HepG2 (cell line): ENCODE measurements at regions of chr14 and their contacts with region 1.

Region 1: DNA sequence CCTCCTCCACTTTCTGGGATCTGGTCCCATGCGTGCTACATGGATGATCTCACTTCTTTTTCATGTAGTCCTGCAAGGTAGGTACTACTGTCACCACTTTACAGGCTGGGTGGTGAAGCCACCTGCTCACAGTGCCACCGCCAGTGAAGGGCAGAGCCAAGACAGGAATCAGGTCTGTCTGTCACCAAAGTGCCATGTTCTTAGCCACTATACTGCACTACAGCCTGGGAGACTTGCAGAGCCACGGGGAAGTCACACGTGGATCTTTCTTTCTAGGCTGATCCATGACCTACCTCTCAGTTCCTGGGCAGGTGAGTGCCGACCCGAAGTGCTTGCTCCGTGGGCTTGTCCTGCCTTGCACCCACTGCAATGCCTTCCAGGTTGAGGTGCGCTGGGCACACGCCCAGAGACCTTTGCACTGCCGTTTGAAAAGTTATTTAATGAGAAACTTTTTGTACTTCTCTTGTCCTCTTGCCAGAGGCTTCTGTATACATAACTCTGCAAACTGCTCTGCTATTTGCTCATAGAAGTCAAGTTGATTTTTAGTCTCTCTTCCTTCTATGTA is 19.7 kb upstream of the CLMN start:
- DNase-seq: peak; percentile 66
- ATAC-seq: peak; percentile 44
- H3K4me3 ChIP-seq: peak overlapping the region in 1 of 3 experiments; percentile 11; a peak in 1 of 6 replicates
- H3K27ac ChIP-seq: no peak overlapping the region
- H3K4me1 ChIP-seq: peaks cover 48% of the 10 kb centered on the region
- H3K27me3 ChIP-seq: peaks cover 0 to 2% of the 10 kb centered on the region in 2 experiments; a peak in 1 of 5 replicates
- CTCF ChIP-seq: no peak
- EP300 ChIP-seq: peak in 1 of 2 experiments; percentile 31; a peak in 1 of 4 replicates
- POLR2A ChIP-seq: no peak
- RAD21 ChIP-seq: no peak

Region 2: DNA sequence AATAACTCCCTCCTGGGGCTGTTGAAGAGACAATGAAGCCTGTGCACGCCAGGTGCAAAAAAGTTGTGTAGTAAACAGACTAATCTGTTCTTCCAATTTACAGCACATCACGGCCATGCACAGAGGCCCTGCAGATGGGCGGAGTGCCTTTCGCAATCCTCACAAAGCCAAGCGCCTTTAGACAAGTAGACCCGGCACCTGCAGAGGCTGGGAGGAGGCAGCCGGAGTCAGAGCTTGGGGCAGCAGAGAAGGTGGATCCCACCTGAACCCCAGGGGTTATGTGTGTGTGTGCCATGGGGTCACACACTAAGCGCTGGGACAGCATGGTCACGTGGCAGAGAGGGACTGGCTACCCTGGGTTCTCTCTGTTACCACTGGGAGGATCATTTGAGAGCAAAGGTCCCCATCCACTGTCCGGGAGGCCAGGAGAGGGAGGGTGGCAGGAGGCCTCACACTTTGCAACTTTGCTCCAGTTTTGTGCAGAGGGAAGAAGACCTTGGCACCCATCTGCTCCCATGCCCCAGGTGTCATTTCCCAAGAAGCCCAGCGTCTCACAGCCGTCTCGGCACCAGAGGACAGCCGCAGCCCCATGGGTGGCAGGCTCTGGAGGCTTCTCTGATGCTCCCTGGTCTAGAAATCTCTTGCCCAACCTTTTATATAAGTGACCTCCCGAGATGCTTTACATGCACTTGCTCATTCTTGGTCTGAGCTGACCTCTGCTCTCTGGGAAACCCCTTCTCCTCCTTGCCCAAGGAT is 102.1 kb before region 1 on chr14:
- CTCF ChIA-PET with region 1: no interaction called
- POLR2A ChIA-PET with region 1: no interaction called
- in situ Hi-C with region 1: no loop called
- intact Hi-C with region 1: loop called (anchors 5 kb)
- DNase-seq: peak; percentile 34
- ATAC-seq: peak; percentile 94
- H3K4me3 ChIP-seq: peak overlapping the region in 2 of 3 experiments; percentile 18 to 54; a peak in 3 of 6 replicates
- H3K27ac ChIP-seq: no peak overlapping the region
- H3K4me1 ChIP-seq: peaks cover 24% of the 10 kb centered on the region
- H3K27me3 ChIP-seq: no peaks in the 10 kb centered on the region
- CTCF ChIP-seq: peak; percentile 28; the same call in 1 of the 2 replicates
- EP300 ChIP-seq: no peak
- POLR2A ChIP-seq: no peak
- RAD21 ChIP-seq: 0 out of 2 replicates have a peak, but pooled peaks have one; percentile 26

Region 3: DNA sequence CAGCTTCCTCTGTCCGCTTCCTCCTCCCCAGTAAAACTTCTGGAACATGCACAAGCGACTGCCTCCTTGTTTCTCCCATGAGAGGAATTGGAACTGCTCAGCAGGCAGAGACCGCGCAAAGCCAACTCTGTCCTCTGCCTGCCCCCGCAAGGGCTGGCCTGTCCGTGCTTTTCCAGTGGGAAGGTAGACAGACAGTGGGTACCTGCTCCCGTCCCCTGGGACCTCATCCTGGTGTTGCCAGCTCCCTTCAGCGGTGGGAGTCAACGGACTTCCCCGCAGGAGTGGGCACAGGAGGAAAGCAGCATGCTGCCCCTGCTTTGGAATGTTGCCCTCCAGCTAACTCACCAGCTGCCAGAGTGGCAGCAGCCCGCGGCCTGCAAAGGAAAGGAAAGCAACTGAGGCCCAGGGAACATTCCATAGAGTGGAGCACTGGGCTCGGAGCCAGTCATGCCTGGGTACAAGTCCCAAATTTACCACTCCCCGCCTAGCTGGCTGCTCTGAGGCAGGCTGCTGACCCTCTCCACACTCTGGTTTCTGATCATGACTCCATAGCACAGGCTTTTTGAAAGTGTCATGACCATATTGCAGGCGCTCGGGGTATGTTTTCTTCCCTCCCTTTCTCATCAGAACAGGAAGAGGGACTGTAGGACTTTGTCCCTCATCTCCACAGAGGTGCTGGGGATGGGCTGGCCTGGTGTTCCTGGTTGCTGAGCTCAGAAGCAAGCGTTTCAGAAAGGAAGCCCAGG is 69.5 kb after region 1 on chr14:
- CTCF ChIA-PET with region 1: no interaction called
- POLR2A ChIA-PET with region 1: no interaction called
- in situ Hi-C with region 1: no loop called
- intact Hi-C with region 1: no loop called
- DNase-seq: no peak
- ATAC-seq: no peak
- H3K4me3 ChIP-seq: no peak overlapping the region
- H3K27ac ChIP-seq: no peak overlapping the region
- H3K4me1 ChIP-seq: no peaks in the 10 kb centered on the region
- H3K27me3 ChIP-seq: no peaks in the 10 kb centered on the region
- CTCF ChIP-seq: no peak
- EP300 ChIP-seq: no peak
- POLR2A ChIP-seq: no peak
- RAD21 ChIP-seq: no peak